Activated CD4-positive, alpha-beta memory T cell treated with anti-CD3 and anti-CD28 coated beads for 36 hours (primary cell): ENCODE measurements at regions of chr18 and their contacts with region 1.

Region 1: DNA sequence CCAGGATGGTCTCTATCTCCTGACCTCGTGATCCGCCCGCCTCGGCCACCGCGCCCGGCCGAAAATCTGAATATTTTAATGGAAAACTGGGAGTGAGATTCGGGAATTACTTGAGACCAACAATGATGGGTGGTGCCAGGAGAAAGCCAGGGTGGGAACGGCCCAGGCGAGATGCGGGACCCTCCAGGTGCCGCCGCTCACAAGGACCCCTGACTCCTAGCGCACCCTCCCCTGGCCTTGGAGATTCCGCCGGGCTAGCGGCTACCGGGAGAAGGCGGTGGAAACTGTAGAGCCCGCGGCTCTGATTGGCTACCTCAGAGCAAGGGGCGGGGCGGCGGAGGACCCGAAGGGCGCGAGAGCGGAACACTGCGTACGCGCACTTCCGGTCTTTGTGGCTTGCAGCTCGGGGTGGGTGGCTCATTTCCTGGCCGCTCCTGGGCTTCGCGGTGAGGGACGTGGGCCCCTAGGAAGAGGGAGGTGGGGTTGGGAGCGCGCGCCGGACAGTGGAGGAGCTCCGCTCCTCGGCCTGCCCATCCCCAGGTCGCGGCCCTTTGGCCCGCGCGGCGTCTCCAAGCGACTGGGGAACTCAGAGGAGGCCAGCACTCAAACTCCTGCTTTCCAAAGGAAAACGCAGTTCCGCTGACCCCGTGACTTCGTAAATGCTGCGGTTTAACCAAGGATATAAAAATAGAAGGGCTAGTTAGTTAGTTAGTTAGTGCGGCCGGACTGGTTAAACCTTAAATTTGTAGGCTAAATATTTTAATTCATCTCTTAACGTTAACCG is at the start of gene ZNF397:
- DNase-seq: peak; percentile 98
- H3K4me3 Mint-ChIP-seq: peak within 1 kb of the TSS; percentile 96
- H3K27ac Mint-ChIP-seq: peak within 1 kb of the TSS; percentile 98
- H3K4me1 Mint-ChIP-seq: peaks cover 26% of the 10 kb centered on the region
- H3K27me3 Mint-ChIP-seq: no peaks in the 10 kb centered on the region
- total RNA-seq, gene ZNF397: 19.2 to 19.6 TPM

Region 2: GRCh38 chr18:35029770-35030169 is 211.1 kb before region 1 on chr18:
- CTCF ChIA-PET with region 1: interaction called, 4 read pairs
- POLR2A ChIA-PET with region 1: no interaction called
- intact Hi-C with region 1: loop called (anchors 2 kb)
- DNase-seq: no peak
- H3K4me3 Mint-ChIP-seq: peak overlapping the region; percentile 73
- H3K27ac Mint-ChIP-seq: peak overlapping the region; percentile 95
- H3K4me1 Mint-ChIP-seq: peaks cover 42% of the 10 kb centered on the region
- H3K27me3 Mint-ChIP-seq: no peaks in the 10 kb centered on the region

Region 3: DNA sequence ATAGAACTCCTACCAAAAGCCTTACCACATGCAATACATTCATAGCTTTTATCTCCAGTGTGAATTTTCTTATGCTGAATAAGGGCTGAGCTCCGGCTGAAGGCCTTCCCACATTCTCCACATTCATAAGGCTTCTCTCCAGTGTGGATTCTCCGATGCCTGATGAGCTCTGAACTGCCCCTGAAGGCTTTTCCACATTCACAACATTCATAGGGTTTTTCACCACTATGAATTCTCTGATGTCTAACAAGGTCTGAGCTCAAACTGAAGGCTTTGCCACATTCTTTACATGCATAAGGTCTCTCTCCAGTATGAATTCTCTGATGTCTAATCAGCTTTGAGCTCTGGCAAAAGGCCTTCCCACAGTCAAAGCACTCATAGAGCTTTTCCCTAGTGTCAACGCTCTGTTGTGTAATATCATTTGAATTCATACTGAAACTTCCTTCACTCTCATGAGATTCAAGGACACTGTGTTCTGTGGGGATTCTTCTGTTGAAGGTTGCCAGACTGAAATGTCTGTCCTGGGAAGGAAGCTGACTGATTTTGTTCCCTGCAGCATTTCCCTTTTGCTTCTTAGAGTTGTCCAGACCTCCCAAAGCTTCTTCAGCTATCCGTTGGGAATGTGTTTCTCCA is 12.9 kb after region 1 on chr18:
- CTCF ChIA-PET with region 1: no interaction called
- POLR2A ChIA-PET with region 1: no interaction called
- intact Hi-C with region 1: no loop called
- DNase-seq: no peak
- H3K4me3 Mint-ChIP-seq: no peak overlapping the region
- H3K27ac Mint-ChIP-seq: no peak overlapping the region
- H3K4me1 Mint-ChIP-seq: no peaks in the 10 kb centered on the region
- H3K27me3 Mint-ChIP-seq: no peaks in the 10 kb centered on the region

Region 4: GRCh38 chr18:35267161-35267651 is 26.4 kb after region 1 on chr18:
- CTCF ChIA-PET with region 1: interaction called, 3 read pairs
- POLR2A ChIA-PET with region 1: interaction called, 9 read pairs
- intact Hi-C with region 1: loop called (anchors 1 kb)
- DNase-seq: peak; percentile 75
- H3K4me3 Mint-ChIP-seq: peak overlapping the region; percentile 71
- H3K27ac Mint-ChIP-seq: peak overlapping the region; percentile 69
- H3K4me1 Mint-ChIP-seq: peaks cover 25% of the 10 kb centered on the region
- H3K27me3 Mint-ChIP-seq: no peaks in the 10 kb centered on the region

Region 5: DNA sequence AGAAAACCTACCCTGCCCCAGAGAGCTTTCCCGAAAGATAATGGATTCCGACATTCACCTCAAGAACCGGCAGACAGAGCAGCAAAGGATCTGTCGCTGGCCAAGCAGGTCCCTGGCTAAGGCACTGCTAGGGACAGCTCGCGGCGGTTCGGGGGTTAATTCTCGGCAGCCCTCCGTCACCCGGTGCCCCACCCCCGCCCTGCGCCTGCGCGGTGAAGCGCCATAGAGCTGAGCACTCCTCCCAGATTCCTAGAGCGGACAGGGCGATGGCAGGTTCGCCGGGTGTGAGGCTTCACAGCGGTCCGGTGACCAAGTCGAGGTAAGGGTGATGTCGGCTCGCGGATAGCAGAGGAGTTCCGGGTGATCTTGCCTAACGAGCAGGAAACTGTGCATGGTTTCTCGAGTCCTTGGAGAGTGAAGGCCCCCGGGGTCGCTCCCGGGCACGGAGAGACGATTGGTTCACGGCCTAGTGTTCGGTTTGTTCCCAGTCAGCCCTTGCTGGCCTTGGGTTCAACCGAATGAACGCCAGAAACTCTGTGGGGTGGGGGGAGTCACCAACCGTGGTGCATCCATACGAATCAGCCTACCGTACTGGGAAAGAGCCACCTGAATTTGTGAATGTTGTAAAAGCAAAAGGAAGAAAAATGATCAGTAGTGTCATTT is 49.3 kb after region 1 on chr18 and contains the start of gene ZSCAN30:
- CTCF ChIA-PET with region 1: no interaction called
- POLR2A ChIA-PET with region 1: interaction called, 15 read pairs
- intact Hi-C with region 1: loop called (anchors 1 kb)
- DNase-seq: peak; percentile 97
- H3K4me3 Mint-ChIP-seq: peak within 1 kb of the TSS; percentile 98
- H3K27ac Mint-ChIP-seq: peak within 1 kb of the TSS; percentile 93
- H3K4me1 Mint-ChIP-seq: peaks cover 37% of the 10 kb centered on the region
- H3K27me3 Mint-ChIP-seq: no peaks in the 10 kb centered on the region
- total RNA-seq, gene ZSCAN30: 17.9 to 19.6 TPM

Region 6: DNA sequence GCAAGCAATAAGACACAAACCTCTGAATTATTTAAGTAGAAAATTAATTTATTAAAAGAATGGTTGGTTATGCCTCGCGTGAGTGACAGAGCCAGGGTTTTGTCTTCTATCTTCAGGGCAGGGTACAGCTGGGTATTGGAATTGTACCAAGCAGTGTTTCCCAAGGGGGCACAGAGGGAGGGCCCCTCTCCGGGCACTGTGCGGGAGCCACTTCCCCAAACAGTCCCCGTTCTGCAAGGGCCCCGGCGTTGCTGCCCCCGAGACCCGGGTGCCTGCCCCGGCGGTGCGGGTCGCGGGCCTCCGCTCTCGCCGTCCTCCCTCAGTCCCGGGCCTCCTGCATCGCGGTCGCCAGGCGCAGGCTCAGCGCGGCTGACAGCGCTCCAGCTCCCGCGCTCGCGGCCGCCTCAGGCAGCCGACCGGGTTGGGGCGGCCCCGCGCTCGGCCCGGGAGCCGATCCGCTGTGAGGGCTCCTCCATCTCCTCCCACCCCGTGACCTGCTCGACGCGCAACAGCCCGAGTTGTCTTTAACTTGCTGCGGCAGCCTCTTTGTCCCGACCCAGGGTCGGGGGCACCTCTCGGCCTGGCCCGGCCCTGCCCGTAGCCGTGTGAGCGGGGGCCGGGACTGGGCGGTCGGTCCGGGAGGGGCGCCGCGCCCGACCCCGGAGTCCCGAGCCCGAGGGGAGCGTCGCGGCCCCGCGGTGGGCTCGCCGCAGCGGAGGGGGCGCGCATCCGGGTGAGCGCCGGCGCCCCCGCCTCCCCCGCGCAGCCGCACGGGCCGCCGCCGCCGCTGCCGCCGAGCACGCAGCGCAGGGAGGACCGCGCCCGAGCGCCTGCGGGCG is 340.1 kb after region 1 on chr18:
- CTCF ChIA-PET with region 1: no interaction called
- POLR2A ChIA-PET with region 1: no interaction called
- intact Hi-C with region 1: loop called (anchors 5 kb)
- DNase-seq: peak; percentile 61
- H3K4me3 Mint-ChIP-seq: peak overlapping the region; percentile 68
- H3K27ac Mint-ChIP-seq: peak overlapping the region; percentile 53
- H3K4me1 Mint-ChIP-seq: peaks cover 34% of the 10 kb centered on the region
- H3K27me3 Mint-ChIP-seq: peaks cover 25% of the 10 kb centered on the region